Activated CD4-positive, alpha-beta memory T cell treated with anti-CD3 and anti-CD28 coated beads for 36 hours (primary cell): ENCODE measurements at regions of chr2 and their contacts with region 1.

Region 1: GRCh38 chr2:64036034-64036705 is 16.9 kb upstream of the VPS54 start:
- DNase-seq: peak; percentile 27
- H3K4me3 Mint-ChIP-seq: peak overlapping the region; percentile 3
- H3K27ac Mint-ChIP-seq: peak overlapping the region; percentile 75
- H3K4me1 Mint-ChIP-seq: peaks cover 48% of the 10 kb centered on the region
- H3K27me3 Mint-ChIP-seq: peaks cover 2% of the 10 kb centered on the region

Region 2: GRCh38 chr2:63903003-63903402 is 133.2 kb before region 1 on chr2:
- CTCF ChIA-PET with region 1: no interaction called
- POLR2A ChIA-PET with region 1: no interaction called
- intact Hi-C with region 1: loop called (anchors 2 kb)
- DNase-seq: no peak
- H3K4me3 Mint-ChIP-seq: no peak overlapping the region
- H3K27ac Mint-ChIP-seq: no peak overlapping the region
- H3K4me1 Mint-ChIP-seq: peaks cover 3% of the 10 kb centered on the region
- H3K27me3 Mint-ChIP-seq: no peaks in the 10 kb centered on the region

Region 3: GRCh38 chr2:64018923-64019718 is 17.0 kb before region 1 on chr2 and contains the start of gene VPS54:
- CTCF ChIA-PET with region 1: interaction called, 4 read pairs
- POLR2A ChIA-PET with region 1: interaction called, 5 read pairs
- intact Hi-C with region 1: loop called (anchors 1 kb)
- DNase-seq: peak; percentile 63
- H3K4me3 Mint-ChIP-seq: peak within 1 kb of the TSS; percentile 98
- H3K27ac Mint-ChIP-seq: peak within 1 kb of the TSS; percentile 93
- H3K4me1 Mint-ChIP-seq: peaks cover 41% of the 10 kb centered on the region
- H3K27me3 Mint-ChIP-seq: no peaks in the 10 kb centered on the region
- total RNA-seq, gene VPS54: 12.5 to 12.8 TPM

Region 4: GRCh38 chr2:64056016-64056415 is 19.8 kb after region 1 on chr2:
- CTCF ChIA-PET with region 1: no interaction called
- POLR2A ChIA-PET with region 1: no interaction called
- intact Hi-C with region 1: no loop called
- DNase-seq: no peak
- H3K4me3 Mint-ChIP-seq: no peak overlapping the region
- H3K27ac Mint-ChIP-seq: no peak overlapping the region
- H3K4me1 Mint-ChIP-seq: peaks cover 27% of the 10 kb centered on the region
- H3K27me3 Mint-ChIP-seq: peaks cover 2% of the 10 kb centered on the region

Region 5: GRCh38 chr2:64101141-64101591 is 65.0 kb after region 1 on chr2:
- CTCF ChIA-PET with region 1: interaction called, 5 read pairs
- POLR2A ChIA-PET with region 1: no interaction called
- intact Hi-C with region 1: loop called (anchors 1 kb)
- DNase-seq: no peak
- H3K4me3 Mint-ChIP-seq: peak overlapping the region; percentile 49
- H3K27ac Mint-ChIP-seq: peak overlapping the region; percentile 78
- H3K4me1 Mint-ChIP-seq: peaks cover 63% of the 10 kb centered on the region
- H3K27me3 Mint-ChIP-seq: no peaks in the 10 kb centered on the region

Region 6: GRCh38 chr2:64114063-64114911 is 78.1 kb after region 1 on chr2:
- CTCF ChIA-PET with region 1: no interaction called
- POLR2A ChIA-PET with region 1: no interaction called
- intact Hi-C with region 1: loop called (anchors 1 kb)
- DNase-seq: no peak
- H3K4me3 Mint-ChIP-seq: no peak overlapping the region
- H3K27ac Mint-ChIP-seq: peak overlapping the region; percentile 85
- H3K4me1 Mint-ChIP-seq: peaks cover 70% of the 10 kb centered on the region
- H3K27me3 Mint-ChIP-seq: no peaks in the 10 kb centered on the region

Region 7: DNA sequence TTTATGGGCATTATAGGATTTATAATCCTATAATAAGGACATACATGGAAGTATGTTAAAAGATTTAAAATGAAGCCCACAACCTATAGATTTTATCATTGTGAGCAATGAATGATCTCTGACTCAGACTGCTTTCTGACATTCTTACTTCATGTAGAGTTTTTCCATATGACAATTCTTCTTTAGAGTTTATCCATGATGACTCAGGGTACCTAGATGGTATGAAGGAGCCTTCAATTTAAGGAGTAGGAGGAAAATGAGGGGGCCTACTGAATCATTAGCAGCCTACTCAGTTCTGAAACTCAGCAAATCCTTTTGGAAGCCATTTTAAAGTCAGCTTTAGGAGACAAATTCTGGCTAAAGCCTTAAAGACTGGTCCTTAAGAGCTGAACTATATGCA is 97.7 kb after region 1 on chr2:
- CTCF ChIA-PET with region 1: interaction called, 3 read pairs
- POLR2A ChIA-PET with region 1: no interaction called
- intact Hi-C with region 1: loop called (anchors 1 kb)
- DNase-seq: no peak
- H3K4me3 Mint-ChIP-seq: peak overlapping the region; percentile 12
- H3K27ac Mint-ChIP-seq: peak overlapping the region; percentile 83
- H3K4me1 Mint-ChIP-seq: peaks cover 84% of the 10 kb centered on the region
- H3K27me3 Mint-ChIP-seq: no peaks in the 10 kb centered on the region

Region 8: DNA sequence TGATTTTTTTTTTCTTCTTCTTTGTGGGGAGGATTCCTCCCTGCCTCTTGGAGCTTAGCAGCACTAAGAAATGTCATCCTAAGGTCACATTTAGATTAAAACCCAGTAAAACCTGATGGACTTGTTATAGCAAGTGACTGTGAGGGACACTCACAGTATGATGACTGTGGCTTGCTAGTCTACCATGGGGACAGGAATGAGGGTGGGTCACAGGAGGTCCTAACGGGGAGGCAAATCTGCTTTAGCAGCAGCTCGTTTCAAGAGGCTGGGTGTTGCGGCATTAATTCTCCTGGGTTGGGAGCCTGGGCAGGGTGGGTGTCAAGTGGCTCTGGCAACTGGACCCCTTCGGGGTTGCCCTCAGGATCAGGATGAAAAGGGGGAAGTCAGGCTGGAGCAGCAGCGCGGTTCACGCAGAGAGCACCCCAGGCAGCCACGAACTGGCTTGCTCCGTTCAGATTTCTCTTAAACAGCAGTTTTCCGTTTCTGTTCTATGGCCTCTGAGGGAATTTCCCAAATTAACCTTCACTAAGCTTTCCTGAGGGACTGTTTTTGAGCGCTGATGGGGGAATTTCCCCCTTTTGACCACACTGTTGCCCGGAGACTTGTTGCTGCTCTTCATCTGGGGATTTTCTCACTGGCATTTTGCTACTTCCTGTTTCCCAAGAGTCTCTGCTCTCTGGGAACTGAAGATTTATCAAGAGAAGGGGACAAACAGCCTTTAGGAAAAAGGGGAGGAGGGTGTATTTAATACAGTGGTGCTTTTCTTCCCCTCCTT is 167.9 kb after region 1 on chr2:
- CTCF ChIA-PET with region 1: no interaction called
- POLR2A ChIA-PET with region 1: no interaction called
- intact Hi-C with region 1: loop called (anchors 2 kb)
- DNase-seq: peak; percentile 69
- H3K4me3 Mint-ChIP-seq: peak overlapping the region; percentile 71
- H3K27ac Mint-ChIP-seq: peak overlapping the region; percentile 87
- H3K4me1 Mint-ChIP-seq: peaks cover 83% of the 10 kb centered on the region
- H3K27me3 Mint-ChIP-seq: no peaks in the 10 kb centered on the region